SK-N-SH (cell line): ENCODE measurements at regions of chr3 and their contacts with region 1.

Region 1: DNA sequence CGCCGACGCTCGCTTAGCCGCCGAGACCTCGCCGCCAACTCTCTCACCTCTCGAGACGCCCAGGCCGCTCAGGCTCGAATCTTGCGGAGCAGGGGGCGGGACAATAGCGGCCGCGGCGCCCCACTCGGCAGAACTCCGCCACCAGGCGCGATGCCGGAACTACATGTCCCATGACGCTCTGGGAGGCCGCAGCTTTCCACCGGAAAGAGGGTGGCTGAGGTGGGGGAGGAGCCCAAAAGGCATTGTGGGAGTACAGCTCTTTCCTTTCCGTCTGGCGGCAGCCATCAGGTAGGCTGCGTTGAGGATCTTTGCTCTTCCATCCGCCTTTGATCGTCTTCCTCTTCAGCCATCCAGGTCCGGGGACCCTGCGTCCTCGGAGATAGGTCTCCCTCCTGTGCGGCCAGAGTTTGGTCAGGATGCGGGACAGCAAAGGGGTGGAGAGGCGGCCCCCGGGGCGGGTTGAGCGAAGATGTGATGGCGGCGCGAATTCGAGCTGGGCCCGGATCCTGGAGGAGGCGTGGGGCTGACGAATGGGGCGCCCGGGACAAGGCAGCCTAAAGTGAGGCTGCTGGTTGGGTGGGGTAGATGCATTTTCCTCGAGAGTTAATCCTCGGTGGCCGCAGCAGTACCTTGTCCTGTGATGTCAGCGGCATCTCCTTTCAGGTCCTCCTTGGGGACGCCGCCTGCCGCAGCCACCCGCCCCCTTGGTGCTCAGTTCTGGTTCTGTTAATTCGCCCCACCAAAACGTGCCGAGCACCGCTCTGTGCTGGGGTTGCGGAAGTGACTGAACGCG is at the starts of genes NKIRAS1 and RPL15:
- DNase-seq: peak; percentile 95
- H3K4me3 ChIP-seq: peak within 1 kb of the TSS; percentile 94 to 96
- H3K27ac ChIP-seq: peak within 1 kb of the TSS; percentile 79 to 94
- H3K4me1 ChIP-seq: peaks cover 0 to 19% of the 10 kb centered on the region in 2 experiments; a peak in 3 of 4 replicates
- H3K27me3 ChIP-seq: no peaks in the 10 kb centered on the region
- CTCF ChIP-seq: no peak
- EP300 ChIP-seq: no peak
- RAD21 ChIP-seq: no peak
- polyA plus RNA-seq, gene NKIRAS1: 8.1 and 10.6 TPM in 2 replicates
- polyA plus RNA-seq, gene RPL15: 4,623 and 5,582 TPM in 2 replicates

Region 2: DNA sequence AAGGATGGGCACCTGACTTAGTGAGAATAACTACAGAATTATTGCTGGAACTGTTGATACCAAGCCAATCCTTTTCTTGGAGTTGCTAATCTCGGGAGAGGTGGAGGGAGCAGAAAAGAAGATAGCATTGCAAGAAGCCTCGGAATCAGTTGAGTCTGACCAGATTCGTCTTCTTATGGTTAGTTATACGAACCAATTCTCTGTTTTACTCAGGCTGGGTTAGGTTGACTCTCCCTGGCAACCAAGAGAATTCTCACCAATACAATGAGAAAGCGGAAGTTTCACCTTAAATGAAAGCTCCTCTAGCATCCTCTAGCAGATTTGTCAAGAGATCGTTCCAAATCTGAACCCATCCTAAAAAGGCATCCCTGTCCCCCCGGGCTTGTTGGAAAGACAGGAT is 154.9 kb before region 1 on chr3:
- CTCF ChIA-PET with region 1: no interaction called
- POLR2A ChIA-PET with region 1: interaction called, 10 read pairs
- DNase-seq: peak; percentile 36
- H3K4me3 ChIP-seq: no peak overlapping the region
- H3K27ac ChIP-seq: peak overlapping the region; percentile 83 to 89
- H3K4me1 ChIP-seq: peaks cover 0 to 19% of the 10 kb centered on the region in 2 experiments; a peak in 1 of 4 replicates
- H3K27me3 ChIP-seq: no peaks in the 10 kb centered on the region
- CTCF ChIP-seq: no peak
- EP300 ChIP-seq: no peak
- RAD21 ChIP-seq: no peak

Region 3: GRCh38 chr3:23797491-23797890 is 119.6 kb before region 1 on chr3:
- CTCF ChIA-PET with region 1: no interaction called
- POLR2A ChIA-PET with region 1: no interaction called
- DNase-seq: no peak
- H3K4me3 ChIP-seq: no peak overlapping the region
- H3K27ac ChIP-seq: no peak overlapping the region
- H3K4me1 ChIP-seq: no peaks in the 10 kb centered on the region
- H3K27me3 ChIP-seq: no peaks in the 10 kb centered on the region
- CTCF ChIP-seq: no peak
- EP300 ChIP-seq: no peak
- RAD21 ChIP-seq: no peak

Region 4: DNA sequence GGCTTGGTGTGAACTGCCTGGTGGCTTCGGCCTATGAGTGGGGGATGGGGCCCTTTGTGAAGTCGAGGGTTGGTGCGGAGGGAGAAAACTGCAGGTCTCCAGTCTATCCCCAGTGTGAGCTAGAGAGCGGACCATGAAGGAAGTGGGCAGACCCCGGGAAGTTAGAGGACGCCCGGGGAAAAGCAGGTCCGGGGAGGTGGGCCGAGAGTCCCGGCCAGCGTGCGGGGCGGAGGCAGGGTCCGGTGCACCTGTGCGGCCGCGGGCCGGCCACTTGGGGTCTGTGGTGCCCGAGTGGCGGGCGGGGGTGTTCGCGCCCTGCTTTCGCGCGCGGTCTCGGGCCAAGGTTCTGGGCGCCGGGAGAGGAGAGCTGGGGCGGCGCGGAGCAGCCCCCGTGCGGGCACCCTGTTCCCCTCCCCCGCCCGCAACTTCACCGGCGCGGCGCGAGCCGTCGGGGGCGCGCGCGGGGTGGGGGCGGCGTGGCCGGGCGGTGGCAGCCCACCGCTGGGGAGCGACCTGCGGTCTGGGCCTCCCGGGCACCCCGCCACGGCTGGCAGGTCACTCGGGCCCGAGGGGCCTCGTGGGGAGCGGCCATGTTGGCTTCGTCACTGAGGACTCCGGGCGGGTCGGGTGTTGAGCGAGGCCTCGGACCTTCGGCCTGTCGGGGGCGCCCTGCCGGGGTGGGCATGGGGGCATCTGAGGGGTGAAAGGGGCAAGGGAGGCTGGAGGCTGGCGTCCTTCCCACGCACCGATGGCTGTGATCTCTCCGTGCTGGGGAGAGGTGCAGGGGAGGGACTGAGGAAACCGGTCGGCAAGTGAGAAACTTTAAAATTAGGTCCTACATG is 106.5 kb before region 1 on chr3:
- CTCF ChIA-PET with region 1: no interaction called
- POLR2A ChIA-PET with region 1: interaction called, 17 read pairs
- DNase-seq: peak; percentile 87
- H3K4me3 ChIP-seq: peak overlapping the region; percentile 63 to 67
- H3K27ac ChIP-seq: peak overlapping the region; percentile 24 to 79; a peak in 3 of 4 replicates
- H3K4me1 ChIP-seq: peaks cover 8 to 33% of the 10 kb centered on the region in 2 experiments; a peak in 2 of 4 replicates
- H3K27me3 ChIP-seq: no peaks in the 10 kb centered on the region
- CTCF ChIP-seq: peak; percentile 47
- EP300 ChIP-seq: no peak
- RAD21 ChIP-seq: no peak

Region 5: GRCh38 chr3:23865595-23866450 is 51.3 kb before region 1 on chr3:
- CTCF ChIA-PET with region 1: no interaction called
- POLR2A ChIA-PET with region 1: interaction called, 13 read pairs
- DNase-seq: peak; percentile 38
- H3K4me3 ChIP-seq: no peak overlapping the region
- H3K27ac ChIP-seq: no peak overlapping the region
- H3K4me1 ChIP-seq: peaks cover 6 to 14% of the 10 kb centered on the region in 2 experiments; a peak in 2 of 4 replicates
- H3K27me3 ChIP-seq: no peaks in the 10 kb centered on the region
- CTCF ChIP-seq: no peak
- EP300 ChIP-seq: no peak
- RAD21 ChIP-seq: no peak

Region 6: GRCh38 chr3:23888617-23889228 is 28.4 kb before region 1 on chr3:
- CTCF ChIA-PET with region 1: interaction called, 11 read pairs
- POLR2A ChIA-PET with region 1: interaction called, 10 read pairs
- DNase-seq: no peak
- H3K4me3 ChIP-seq: no peak overlapping the region; a peak in 1 of 4 replicates
- H3K27ac ChIP-seq: no peak overlapping the region; a peak in 1 of 4 replicates
- H3K4me1 ChIP-seq: no peaks in the 10 kb centered on the region; a peak in 2 of 4 replicates
- H3K27me3 ChIP-seq: no peaks in the 10 kb centered on the region
- CTCF ChIP-seq: peak; percentile 93
- EP300 ChIP-seq: no peak
- RAD21 ChIP-seq: peak; percentile 73

Region 7: DNA sequence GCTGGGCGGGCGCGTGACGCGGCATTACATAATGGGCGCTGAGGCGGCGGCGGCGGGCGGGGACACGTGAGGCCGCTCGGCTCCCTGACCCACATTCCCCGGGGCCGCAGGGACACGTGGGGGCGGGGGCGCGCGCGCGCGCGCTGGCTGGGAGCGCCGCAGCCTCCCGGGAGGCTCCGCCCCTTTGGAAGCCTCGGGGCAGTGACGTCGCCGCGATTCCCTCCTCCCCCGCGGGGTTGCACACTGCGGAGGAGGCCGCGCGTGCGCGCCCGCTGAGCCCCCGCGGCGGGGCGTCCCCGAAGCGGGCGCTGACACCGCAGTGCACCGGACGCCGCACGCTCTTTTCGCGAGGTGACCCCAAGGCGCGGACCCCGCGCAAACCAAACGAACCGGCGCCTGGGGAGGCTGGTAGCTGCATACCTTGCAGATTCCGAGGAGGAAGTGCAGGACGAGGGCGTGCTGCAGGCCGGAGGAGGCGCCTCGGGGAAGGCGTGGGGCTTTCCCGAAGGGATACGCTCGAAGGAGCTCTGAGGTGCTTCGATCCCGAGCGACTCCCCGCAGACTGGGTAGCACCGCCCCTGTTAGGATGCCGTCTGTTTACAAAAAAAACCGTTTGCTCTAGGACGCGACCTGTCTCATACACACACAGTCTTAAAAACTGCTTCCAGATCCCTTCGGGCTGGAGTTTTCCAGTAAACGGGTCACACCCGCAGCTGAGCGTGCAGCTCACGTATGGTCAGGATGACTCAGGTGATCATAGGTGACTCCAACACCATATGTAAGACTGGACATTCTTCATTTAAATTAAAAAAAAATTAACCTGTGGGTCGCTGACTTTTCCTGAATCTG is 29.0 kb after region 1 on chr3:
- CTCF ChIA-PET with region 1: interaction called, 3 read pairs
- POLR2A ChIA-PET with region 1: interaction called, 18 read pairs
- DNase-seq: peak; percentile 99
- H3K4me3 ChIP-seq: peak overlapping the region; percentile 78 to 84
- H3K27ac ChIP-seq: peak overlapping the region; percentile 86
- H3K4me1 ChIP-seq: peaks cover 15 to 32% of the 10 kb centered on the region in 2 experiments
- H3K27me3 ChIP-seq: no peaks in the 10 kb centered on the region
- CTCF ChIP-seq: no peak
- EP300 ChIP-seq: peak; percentile 30 to 56; a peak in 2 of 4 replicates
- RAD21 ChIP-seq: no peak

Region 8: DNA sequence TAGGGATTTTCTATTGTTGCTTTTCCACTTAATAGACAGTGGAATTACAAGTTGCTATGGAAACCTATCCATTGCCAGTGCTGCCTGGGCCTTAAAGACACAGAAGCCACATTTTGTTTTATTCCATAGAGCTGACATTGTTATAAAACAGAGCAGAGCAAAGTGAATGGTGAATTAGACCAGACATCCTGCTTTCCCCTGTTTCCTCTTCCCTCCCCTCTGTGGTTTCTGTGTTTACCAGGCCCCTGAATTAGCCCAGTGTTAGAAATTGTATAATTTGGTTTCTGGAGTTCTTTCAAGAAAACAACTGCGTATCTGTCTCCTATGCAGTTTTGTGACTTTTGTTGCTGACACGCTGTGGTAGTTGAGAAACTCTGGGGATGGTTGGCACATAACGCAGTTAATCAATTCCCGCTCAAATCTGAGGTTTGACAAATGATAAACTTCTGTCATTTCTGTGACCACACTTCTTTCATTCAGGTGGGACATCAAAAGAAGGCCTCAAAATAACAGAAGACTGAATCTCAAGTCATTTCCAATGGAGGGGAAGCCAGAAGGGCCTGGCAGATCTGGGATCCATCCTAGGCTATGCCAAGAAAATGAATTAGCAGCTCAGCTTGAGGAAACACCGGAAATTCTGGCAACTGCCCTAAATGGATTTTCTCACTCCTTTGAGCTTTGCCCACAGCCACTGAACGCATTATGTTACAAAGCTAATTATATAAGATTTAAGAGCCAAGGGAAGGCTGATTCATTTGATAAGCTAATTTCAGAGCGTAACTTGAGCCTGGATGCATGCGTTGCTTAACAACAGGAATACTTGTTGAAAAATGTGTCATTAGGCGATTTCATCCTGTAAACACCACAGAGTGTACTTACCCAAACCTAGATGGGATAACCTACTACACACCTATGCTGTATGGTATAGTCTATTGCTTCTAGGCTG is 74.9 kb after region 1 on chr3:
- CTCF ChIA-PET with region 1: interaction called, 3 read pairs
- POLR2A ChIA-PET with region 1: interaction called, 49 read pairs
- DNase-seq: peak; percentile 69
- H3K4me3 ChIP-seq: no peak overlapping the region
- H3K27ac ChIP-seq: peak overlapping the region; percentile 62 to 99
- H3K4me1 ChIP-seq: peaks cover 35 to 47% of the 10 kb centered on the region in 2 experiments
- H3K27me3 ChIP-seq: no peaks in the 10 kb centered on the region
- CTCF ChIP-seq: no peak
- EP300 ChIP-seq: peak; percentile 56 to 97; a peak in 3 of 4 replicates
- RAD21 ChIP-seq: peak; percentile 25

Region 9: DNA sequence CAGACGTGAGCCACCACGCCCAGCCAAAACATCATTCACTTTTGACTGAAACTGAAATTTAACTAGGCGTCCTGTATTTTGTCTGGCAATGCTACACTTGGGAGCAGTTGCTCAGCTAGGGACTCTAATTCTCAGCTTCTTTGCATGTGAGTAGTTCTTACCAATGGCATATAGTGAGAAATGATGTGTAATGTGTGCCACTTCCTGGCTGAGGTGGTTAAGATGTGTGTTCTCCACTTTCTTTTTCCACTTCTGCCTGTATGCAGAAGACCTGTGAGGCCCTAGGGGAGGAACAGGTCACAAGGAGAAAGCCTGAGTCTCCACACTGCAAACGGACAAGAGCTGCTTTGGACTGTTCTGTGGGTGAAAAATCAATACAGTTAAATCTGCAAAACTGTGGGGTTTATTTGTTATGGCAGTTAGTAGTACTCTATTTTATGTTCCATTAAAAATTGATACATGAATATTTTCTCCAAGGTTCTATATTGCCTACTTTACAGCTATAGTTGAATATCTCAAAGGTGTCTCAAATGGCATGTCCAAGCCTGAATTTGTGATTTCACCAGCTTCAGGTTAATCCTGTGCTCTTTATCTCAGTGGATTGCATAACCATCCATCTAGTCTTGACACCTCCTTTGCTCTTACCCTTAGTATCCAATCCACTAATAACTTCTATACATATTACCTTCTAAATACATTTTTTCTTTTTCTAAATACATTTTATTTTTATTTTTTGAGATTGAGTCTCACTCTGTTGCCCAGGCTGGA is 87.3 kb after region 1 on chr3:
- CTCF ChIA-PET with region 1: no interaction called
- POLR2A ChIA-PET with region 1: no interaction called
- DNase-seq: no peak
- H3K4me3 ChIP-seq: no peak overlapping the region
- H3K27ac ChIP-seq: no peak overlapping the region
- H3K4me1 ChIP-seq: peaks cover 0 to under 1% of the 10 kb centered on the region in 2 experiments; a peak in 1 of 4 replicates
- H3K27me3 ChIP-seq: no peaks in the 10 kb centered on the region
- CTCF ChIP-seq: no peak
- EP300 ChIP-seq: no peak
- RAD21 ChIP-seq: no peak